CD14-positive monocyte (primary cell): ENCODE measurements at regions of chr3 and their contacts with region 1.

Region 1: GRCh38 chr3:151282921-151283320 is 4.6 kb upstream of the P2RY14 start:
- DNase-seq: peak; percentile 44 to 68 (median 62)
- H3K4me3 ChIP-seq: no peak overlapping the region
- H3K4me3 Mint-ChIP-seq: no peak overlapping the region
- H3K27ac ChIP-seq: no peak overlapping the region
- H3K27ac Mint-ChIP-seq: no peak overlapping the region
- H3K4me1 ChIP-seq: peaks cover 24 to 25% of the 10 kb centered on the region in 2 donors
- H3K4me1 Mint-ChIP-seq: peaks cover 22% of the 10 kb centered on the region
- H3K27me3 ChIP-seq: no peaks in the 10 kb centered on the region
- H3K27me3 Mint-ChIP-seq: peaks cover 0 to 2% (median 0%) of the 10 kb centered on the region in 3 donors
- CTCF ChIP-seq: peak; percentile 77

Region 2: GRCh38 chr3:151227807-151228665 is 54.9 kb before region 1 on chr3:
- intact Hi-C with region 1: loop called (anchors 2 kb)
- DNase-seq: peak; percentile 68 to 77 (median 74)
- H3K4me3 ChIP-seq: no peak overlapping the region
- H3K4me3 Mint-ChIP-seq: no peak overlapping the region
- H3K27ac ChIP-seq: peak overlapping the region in 1 of 2 donors; percentile 51
- H3K27ac Mint-ChIP-seq: peak overlapping the region; percentile 55 to 87 (median 73)
- H3K4me1 ChIP-seq: peaks cover 26 to 43% of the 10 kb centered on the region in 2 donors
- H3K4me1 Mint-ChIP-seq: peaks cover 39% of the 10 kb centered on the region
- H3K27me3 ChIP-seq: no peaks in the 10 kb centered on the region
- H3K27me3 Mint-ChIP-seq: peaks cover 0 to 2% (median 0%) of the 10 kb centered on the region in 3 donors
- CTCF ChIP-seq: peak; percentile 91

Region 3: GRCh38 chr3:151248772-151249337 is 34.1 kb before region 1 on chr3:
- intact Hi-C with region 1: no loop called
- DNase-seq: no peak
- H3K4me3 ChIP-seq: no peak overlapping the region
- H3K4me3 Mint-ChIP-seq: no peak overlapping the region
- H3K27ac ChIP-seq: no peak overlapping the region
- H3K27ac Mint-ChIP-seq: no peak overlapping the region
- H3K4me1 ChIP-seq: no peaks in the 10 kb centered on the region
- H3K4me1 Mint-ChIP-seq: no peaks in the 10 kb centered on the region
- H3K27me3 ChIP-seq: no peaks in the 10 kb centered on the region
- H3K27me3 Mint-ChIP-seq: no peaks in the 10 kb centered on the region
- CTCF ChIP-seq: no peak